A673 (cell line): ENCODE measurements at regions of chr2 and their contacts with region 1.

Region 1: GRCh38 chr2:176638167-176639015 is 369.1 kb downstream of the MTX2 start:
- DNase-seq: peak; percentile 88
- H3K4me3 ChIP-seq: peak overlapping the region; percentile 76
- H3K27ac ChIP-seq: peak overlapping the region; percentile 89
- H3K4me1 ChIP-seq: peaks cover 36% of the 10 kb centered on the region
- H3K27me3 ChIP-seq: no peaks in the 10 kb centered on the region
- CTCF ChIP-seq: peak; percentile 78

Region 2: DNA sequence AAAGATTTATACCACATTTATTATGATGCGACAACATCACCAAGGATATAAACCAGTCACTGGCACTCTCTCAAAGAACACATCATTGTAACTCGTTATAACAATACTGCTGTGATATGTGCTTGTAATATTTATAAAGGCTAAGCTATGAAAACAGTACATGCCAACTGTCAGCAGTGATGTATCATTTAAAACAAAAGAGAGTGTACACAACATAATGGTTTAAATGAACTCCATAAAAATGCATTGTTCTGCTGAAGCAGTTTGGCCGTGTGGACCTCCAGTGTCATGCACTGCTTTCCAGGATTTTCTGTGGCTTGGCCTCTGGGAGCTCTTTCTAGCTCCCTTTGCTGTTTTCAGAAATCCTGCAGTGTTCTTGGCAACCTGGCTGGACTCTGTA is 153.6 kb before region 1 on chr2:
- CTCF ChIA-PET with region 1: no interaction called
- POLR2A ChIA-PET with region 1: no interaction called
- intact Hi-C with region 1: no loop called
- DNase-seq: no peak
- H3K4me3 ChIP-seq: no peak overlapping the region
- H3K27ac ChIP-seq: no peak overlapping the region
- H3K4me1 ChIP-seq: no peaks in the 10 kb centered on the region
- H3K27me3 ChIP-seq: no peaks in the 10 kb centered on the region
- CTCF ChIP-seq: no peak

Region 3: GRCh38 chr2:176540995-176541394 is 97.4 kb before region 1 on chr2:
- CTCF ChIA-PET with region 1: interaction called, 16 read pairs
- POLR2A ChIA-PET with region 1: no interaction called
- intact Hi-C with region 1: no loop called
- DNase-seq: peak; percentile 35
- H3K4me3 ChIP-seq: no peak overlapping the region
- H3K27ac ChIP-seq: no peak overlapping the region
- H3K4me1 ChIP-seq: peaks cover 36% of the 10 kb centered on the region
- H3K27me3 ChIP-seq: no peaks in the 10 kb centered on the region
- CTCF ChIP-seq: no peak

Region 4: DNA sequence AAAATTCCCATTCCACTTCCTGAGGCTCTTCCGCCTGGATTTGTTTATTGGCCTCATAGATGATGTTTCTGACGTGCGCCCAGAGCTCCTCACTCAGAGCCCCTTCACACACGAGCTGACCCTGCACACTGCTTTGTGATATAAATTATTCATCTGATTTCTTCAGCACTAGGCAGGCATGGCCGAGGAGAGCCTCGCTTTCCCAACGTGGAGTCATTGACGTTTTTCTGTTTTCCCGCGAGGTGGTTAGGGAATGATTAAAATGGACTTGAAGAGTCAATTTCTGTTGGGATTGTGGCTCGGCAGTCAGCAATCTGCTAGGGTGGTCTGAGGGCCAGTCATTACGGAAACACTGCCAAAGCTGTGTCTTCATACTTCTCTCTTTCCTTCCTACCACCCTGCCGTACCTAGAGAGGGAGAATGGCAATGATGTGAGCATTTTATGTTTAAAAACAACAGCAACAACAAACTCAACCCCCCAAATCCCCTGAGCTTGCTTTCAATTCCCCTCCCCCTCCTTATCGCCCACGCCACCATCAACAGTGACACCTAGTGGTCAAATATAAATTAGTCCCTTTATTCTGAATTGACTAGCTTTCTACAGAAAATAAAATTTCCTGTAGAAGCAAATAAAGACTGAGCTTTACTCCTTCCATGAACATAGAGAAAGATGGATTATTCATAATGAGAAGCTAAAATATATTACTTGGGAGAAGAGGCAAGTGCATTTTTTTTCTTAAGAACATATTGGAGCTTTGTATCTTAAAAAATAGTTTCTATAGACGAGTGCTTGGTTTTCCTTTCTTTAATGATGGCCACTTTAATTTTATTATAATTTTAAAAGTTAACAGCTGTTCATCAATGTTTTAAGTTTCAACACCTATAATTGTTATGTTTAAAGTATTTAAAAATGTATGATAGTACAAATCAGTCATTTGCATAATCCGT is 84.0 kb before region 1 on chr2:
- CTCF ChIA-PET with region 1: no interaction called
- POLR2A ChIA-PET with region 1: no interaction called
- intact Hi-C with region 1: loop called (anchors 5 kb)
- DNase-seq: peak; percentile 86
- H3K4me3 ChIP-seq: peak overlapping the region; percentile 53
- H3K27ac ChIP-seq: peak overlapping the region; percentile 80
- H3K4me1 ChIP-seq: peaks cover 19% of the 10 kb centered on the region
- H3K27me3 ChIP-seq: no peaks in the 10 kb centered on the region
- CTCF ChIP-seq: peak; percentile 82

Region 5: DNA sequence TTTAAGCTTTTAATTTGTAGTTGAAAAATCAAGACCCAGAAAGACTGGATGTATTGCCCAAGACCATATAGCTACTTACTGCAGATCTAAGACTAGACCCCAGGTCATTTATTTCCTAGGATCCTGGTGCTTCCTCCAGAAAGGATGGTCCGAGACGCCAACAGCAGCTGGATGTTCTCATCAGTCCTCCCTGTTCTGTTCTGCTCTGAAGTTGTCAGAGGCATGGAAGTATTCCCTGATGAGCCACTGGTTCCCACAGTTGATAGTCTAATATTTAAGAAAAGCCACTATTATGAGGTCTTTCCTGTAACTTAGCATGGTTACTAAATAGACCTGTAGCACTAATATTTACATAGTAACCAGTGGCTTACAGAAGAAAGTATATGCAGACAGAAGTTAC is 24.4 kb after region 1 on chr2:
- CTCF ChIA-PET with region 1: no interaction called
- POLR2A ChIA-PET with region 1: no interaction called
- intact Hi-C with region 1: no loop called
- DNase-seq: no peak
- H3K4me3 ChIP-seq: no peak overlapping the region
- H3K27ac ChIP-seq: peak overlapping the region; percentile 80
- H3K4me1 ChIP-seq: peaks cover 75% of the 10 kb centered on the region
- H3K27me3 ChIP-seq: no peaks in the 10 kb centered on the region
- CTCF ChIP-seq: no peak

Region 6: DNA sequence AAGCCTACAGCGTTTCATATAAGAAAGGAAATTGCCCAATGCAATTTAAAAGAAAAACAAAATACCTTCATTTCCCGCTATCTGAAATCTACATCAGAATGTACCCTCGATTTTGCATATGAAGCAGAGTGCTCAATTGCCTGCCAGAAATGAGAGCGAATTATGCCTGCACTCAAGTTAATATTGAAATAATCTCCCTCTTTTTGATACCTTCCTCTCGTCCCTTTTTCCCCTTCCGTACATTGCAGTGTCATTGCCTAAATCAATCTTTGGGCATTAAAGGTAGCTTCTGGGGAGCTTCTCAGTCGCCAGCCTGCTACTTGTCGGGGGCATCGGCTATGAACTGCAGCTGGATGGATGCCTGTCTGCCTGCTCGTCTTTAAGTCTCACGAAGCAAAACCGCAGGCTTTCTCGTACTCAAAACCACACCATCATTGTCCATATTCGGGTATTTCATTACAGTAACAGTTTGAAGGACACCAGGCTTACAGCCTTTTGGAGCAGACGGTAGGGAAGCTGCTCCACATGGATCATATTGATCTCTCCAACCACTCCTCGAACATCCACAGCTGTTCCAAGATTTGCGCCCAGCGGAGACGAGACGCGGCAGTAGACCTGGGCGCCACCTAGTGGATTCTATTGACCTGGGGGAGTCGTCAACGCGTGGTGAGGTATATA is 510.2 kb after region 1 on chr2:
- CTCF ChIA-PET with region 1: interaction called, 3 read pairs
- POLR2A ChIA-PET with region 1: interaction called, 4 read pairs
- intact Hi-C with region 1: loop called (anchors 5 kb)
- DNase-seq: peak; percentile 96
- H3K4me3 ChIP-seq: peak overlapping the region; percentile 48
- H3K27ac ChIP-seq: peak overlapping the region; percentile 57
- H3K4me1 ChIP-seq: peaks cover 40% of the 10 kb centered on the region
- H3K27me3 ChIP-seq: no peaks in the 10 kb centered on the region
- CTCF ChIP-seq: peak; percentile 95